ENCODE measurements at regions of chr5 and their contacts with region 1.

Region 1: DNA sequence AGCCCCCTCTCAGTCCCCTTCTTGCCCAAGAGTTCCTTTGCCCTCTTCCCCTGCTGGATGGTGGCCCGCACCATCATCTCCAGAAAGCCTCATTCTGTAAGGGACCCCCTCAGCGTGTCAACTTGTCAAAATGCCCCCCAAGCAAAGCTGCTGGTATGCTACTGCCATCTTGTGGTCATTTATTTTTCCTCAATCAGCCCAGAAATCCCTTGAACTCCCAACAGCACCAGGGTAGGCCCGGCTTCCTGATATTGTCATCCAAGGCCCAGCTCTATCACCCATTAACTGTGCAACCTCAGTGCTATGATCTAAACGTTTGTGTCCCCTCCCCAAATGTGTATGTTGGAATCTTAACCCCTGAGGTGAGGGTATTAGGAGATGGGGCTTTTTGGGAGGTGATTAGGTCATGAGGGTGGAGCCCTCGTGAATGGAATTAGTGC is 53.2 kb upstream of the FBXW11 start:
- DNase-seq: peak; percentile 48
- H3K27ac ChIP-seq: no peak overlapping the region
- CTCF ChIP-seq: peak; percentile 79

Region 2: GRCh38 chr5:171913987-171914273 is 145.8 kb before region 1 on chr5:
- CTCF ChIA-PET with region 1: interaction called, 43 read pairs
- POLR2A ChIA-PET with region 1: no interaction called
- DNase-seq: no peak
- H3K27ac ChIP-seq: no peak overlapping the region
- CTCF ChIP-seq: no peak

Region 3: GRCh38 chr5:171961117-171961516 is 98.6 kb before region 1 on chr5:
- CTCF ChIA-PET with region 1: no interaction called
- POLR2A ChIA-PET with region 1: interaction called, 11 read pairs
- DNase-seq: no peak
- H3K27ac ChIP-seq: no peak overlapping the region
- CTCF ChIP-seq: no peak

Region 4: DNA sequence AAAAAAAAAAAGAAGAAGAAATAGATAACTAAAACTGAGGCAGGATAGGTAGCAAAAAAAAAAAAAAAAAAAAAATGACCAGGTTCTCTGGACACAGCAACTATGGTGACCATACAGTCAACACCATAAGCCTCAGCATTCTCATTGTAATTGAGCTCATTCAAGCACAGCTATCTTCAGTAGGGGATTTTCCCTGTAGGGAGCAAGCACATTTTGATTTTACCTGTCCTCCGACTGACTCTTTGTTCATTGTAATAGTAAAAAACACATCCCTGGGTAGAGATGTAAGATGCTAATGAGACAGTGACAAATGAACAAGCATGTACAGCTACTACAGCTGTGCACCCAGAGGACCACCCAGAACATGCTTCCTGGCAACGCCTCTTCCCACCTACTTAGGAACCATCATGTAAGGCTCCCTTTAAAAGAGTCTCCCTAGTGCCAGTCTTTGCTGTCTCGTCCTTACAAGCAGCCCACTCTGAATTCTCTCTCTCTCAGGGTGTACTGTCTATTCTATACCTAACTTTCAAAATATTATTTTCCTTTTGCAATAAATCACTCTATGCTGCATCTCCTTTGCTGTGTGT is 11.7 kb after region 1 on chr5:
- CTCF ChIA-PET with region 1: interaction called, 17 read pairs
- POLR2A ChIA-PET with region 1: no interaction called
- DNase-seq: no peak
- H3K27ac ChIP-seq: no peak overlapping the region
- CTCF ChIP-seq: no peak

Measured in RWPE1 (cell line).